ENCODE measurements at regions of chr13 and their contacts with region 1.

Region 1: DNA sequence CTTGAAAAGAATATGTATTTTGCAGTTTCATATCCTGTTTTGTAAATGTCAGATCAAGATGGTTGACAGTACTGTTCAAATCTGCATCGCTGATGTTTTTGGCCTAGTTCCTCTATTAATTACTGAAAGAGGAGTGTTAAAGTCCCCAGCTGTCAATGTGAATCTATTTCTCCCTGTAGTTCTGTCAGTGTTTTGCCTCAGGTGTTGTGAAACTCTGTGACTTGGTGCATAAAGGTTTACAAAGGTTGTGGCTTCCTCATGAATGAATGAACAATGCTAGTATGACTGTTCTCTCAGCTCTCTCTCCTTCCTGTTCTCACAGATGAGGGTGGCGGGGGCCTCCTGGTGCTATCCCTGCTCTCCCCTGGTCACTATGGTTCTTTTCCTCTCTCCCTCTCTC is 142.4 kb downstream of the MYCBP2 start:
- DNase-seq: no peak
- H3K4me3 ChIP-seq: no peak overlapping the region
- H3K27ac ChIP-seq: no peak overlapping the region
- H3K4me1 ChIP-seq: no peaks in the 10 kb centered on the region
- H3K27me3 ChIP-seq: no peaks in the 10 kb centered on the region
- CTCF ChIP-seq: no peak

Region 2: GRCh38 chr13:77429320-77430142 is 245.1 kb after region 1 on chr13:
- CTCF ChIA-PET with region 1: no interaction called
- POLR2A ChIA-PET with region 1: interaction called, 26 read pairs
- intact Hi-C with region 1: no loop called
- DNase-seq: no peak
- H3K4me3 ChIP-seq: no peak overlapping the region
- H3K27ac ChIP-seq: no peak overlapping the region
- H3K4me1 ChIP-seq: no peaks in the 10 kb centered on the region
- H3K27me3 ChIP-seq: no peaks in the 10 kb centered on the region
- CTCF ChIP-seq: no peak

Measured in A673 (cell line).